Left cardiac atrium (tissue), 4 donors: ENCODE measurements at regions of chr13 and their contacts with region 1.

Region 1: GRCh38 chr13:79314652-79315051 is 91.4 kb downstream of the RBM26 start:
- DNase-seq: no peak
- ATAC-seq: no peak

Region 2: GRCh38 chr13:79060216-79060615 is 254.4 kb before region 1 on chr13:
- intact Hi-C with region 1: no loop called
- DNase-seq: no peak
- ATAC-seq: no peak

Region 3: GRCh38 chr13:79096099-79096498 is 218.6 kb before region 1 on chr13:
- intact Hi-C with region 1: no loop called
- DNase-seq: no peak
- ATAC-seq: no peak

Region 4: GRCh38 chr13:79533781-79534400 is 219.2 kb after region 1 on chr13:
- intact Hi-C with region 1: loop called in 1 of 2 experiments (anchors 5 kb)
- DNase-seq: no peak
- ATAC-seq: peak in 1 of 2 donors; percentile 22

Region 5: DNA sequence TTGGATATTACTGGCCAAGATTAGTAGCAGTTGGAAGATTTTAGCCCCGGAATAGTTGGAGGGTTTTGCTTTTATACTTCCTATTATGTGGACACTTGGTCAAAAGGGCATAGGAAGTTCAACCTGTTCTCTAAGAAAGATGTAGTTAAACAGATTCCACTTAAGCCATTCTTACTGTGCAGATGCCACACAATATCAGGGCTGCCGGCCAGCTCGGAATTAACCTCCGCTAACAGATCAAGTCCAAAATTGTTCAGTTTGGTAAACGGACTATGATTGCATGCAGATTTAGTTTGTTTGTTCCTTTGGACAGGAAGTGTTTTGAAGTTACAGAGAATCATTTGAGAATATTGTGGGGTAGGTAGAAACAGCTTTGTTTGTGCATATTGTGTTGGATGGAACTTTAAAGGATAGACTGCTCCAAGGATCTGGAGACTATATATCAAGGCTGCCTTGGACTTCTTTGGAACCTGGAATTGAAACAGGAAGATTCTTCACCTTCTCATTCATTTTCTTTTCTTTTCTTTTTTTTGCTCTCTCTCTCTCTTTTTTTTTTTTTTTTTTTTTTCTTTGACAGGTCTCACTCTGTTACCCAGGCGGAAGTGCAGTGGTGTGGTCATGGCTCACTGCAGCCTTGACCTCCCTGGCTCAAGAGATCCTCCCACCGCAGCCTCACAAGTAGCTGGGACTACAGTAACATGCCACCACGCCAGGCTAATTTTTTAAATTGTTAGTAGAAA is 1031.3 kb after region 1 on chr13:
- intact Hi-C with region 1: no loop called
- DNase-seq: no peak
- ATAC-seq: no peak